Ascending aorta (tissue), 2 donors: ENCODE measurements at regions of chr9 and their contacts with region 1.

Region 1: GRCh38 chr9:522658-523057 is 308.0 kb downstream of the DOCK8 start:
- DNase-seq: peak in 1 of 2 donors; percentile 70
- H3K4me3 ChIP-seq: no peak overlapping the region
- H3K27ac ChIP-seq: peak overlapping the region; percentile 42 to 50
- H3K4me1 ChIP-seq: peaks cover 3 to 32% of the 10 kb centered on the region in 2 donors
- H3K27me3 ChIP-seq: no peaks in the 10 kb centered on the region
- CTCF ChIP-seq: no peak

Region 2: GRCh38 chr9:469672-470551 is 52.7 kb before region 1 on chr9:
- intact Hi-C with region 1: no loop called
- DNase-seq: peak; percentile 15 to 87
- H3K4me3 ChIP-seq: peak overlapping the region; percentile 77 to 80
- H3K27ac ChIP-seq: peak overlapping the region in 1 of 2 donors; percentile 43
- H3K4me1 ChIP-seq: peaks cover 3 to 8% of the 10 kb centered on the region in 2 donors
- H3K27me3 ChIP-seq: no peaks in the 10 kb centered on the region
- CTCF ChIP-seq: no peak

Region 3: DNA sequence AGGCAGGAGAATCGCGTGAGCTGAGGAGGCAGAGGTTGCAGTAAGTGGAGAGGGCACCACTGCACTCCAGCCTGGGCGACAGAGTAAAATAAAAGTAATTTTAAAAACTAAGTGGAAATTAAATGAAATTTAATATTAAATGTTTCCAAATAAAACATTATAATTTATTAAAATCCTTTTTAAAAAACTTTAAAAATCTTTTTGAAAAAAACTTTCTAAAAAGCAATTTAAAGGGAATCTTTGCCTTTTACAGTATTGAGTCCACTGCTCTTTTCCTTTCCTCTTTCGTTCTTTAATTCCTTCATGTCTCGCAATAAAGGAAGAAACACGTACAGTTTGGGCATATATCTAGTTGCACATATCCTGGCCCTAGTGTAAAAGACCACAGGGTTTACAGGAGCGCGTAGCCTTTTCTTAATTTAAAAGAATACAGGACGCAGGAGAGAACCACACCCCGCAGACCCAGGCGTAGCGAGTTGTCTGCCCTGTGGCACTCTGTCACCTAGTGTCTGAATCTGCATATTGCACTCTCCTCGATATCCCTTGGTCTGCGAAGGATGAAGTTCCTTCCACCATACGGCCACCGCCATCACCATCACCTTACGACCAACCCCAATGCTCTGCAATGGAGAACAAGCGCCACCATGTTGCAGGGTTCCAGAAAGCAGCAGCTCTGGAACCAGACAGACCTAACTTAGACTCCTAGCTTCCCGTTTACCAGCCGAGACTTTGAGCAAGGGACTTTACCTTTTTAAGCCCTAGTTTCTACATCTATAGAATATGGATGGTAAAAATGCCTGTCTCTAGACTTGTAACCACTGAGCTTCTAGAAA is 241.2 kb after region 1 on chr9:
- intact Hi-C with region 1: loop called (anchors 5 kb)
- DNase-seq: peak in 1 of 2 donors; percentile 85
- H3K4me3 ChIP-seq: peak overlapping the region in 1 of 2 donors; percentile 41
- H3K27ac ChIP-seq: no peak overlapping the region
- H3K4me1 ChIP-seq: peaks cover 0 to 17% of the 10 kb centered on the region in 2 donors
- H3K27me3 ChIP-seq: no peaks in the 10 kb centered on the region
- CTCF ChIP-seq: peak; percentile 75 to 90 (median 90)